Activated CD4-positive, alpha-beta T cell treated with anti-CD3 and anti-CD28 coated beads, Interleukin-2, amount 10 ng/mL, durations not matched to agents 24 days and 14 days (primary cell): ENCODE measurements at regions of chr5 and their contacts with region 1.

Region 1: DNA sequence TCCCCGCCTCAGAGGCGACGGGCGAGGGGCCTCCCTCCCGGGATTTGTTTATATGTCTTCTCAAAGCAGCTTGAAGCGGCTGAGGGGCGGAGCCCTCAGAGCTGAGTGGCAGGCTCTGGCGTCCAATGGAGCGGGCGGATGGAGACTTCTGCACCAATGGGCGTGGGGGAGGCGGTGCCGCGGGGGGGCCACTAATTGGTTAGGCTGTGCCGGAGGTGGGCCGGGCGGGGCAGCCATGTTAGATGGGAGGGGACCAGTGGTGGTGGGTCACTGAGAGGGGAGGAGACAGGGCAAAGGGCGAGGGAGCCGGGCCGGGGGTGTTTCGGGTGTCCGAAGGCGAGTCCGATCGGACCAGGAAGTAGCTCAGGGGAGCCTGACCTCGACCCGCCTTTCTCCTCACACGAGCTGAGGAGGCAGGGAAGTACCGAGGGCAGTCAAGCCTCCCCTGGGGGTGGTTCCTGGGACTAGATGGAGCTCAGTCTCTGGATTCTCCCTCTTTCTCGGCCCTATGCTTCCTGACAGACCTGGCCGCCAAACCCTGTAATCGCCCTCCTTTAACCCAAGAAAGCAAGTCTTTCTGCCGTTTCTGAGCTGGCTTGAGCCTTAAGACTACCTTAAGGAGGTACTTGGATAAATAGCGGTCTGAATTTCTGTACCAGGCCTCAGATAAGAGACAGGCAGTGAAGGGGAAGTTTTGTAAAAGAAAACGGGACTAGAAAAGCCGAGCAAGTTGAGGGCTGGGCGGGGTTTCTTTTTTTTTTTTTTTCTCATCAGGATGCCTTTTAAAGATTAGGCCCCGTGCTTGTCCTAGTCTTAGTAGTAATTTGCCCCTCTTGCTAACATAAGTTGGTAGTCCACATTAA is 1.1 kb downstream of the CREBRF start:
- DNase-seq: peak; percentile 100
- H3K4me3 Mint-ChIP-seq: peak overlapping the region; percentile 95
- H3K27ac Mint-ChIP-seq: peak overlapping the region; percentile 96
- H3K4me1 Mint-ChIP-seq: peaks cover 24% of the 10 kb centered on the region
- H3K27me3 Mint-ChIP-seq: no peaks in the 10 kb centered on the region

Region 2: GRCh38 chr5:172006321-172007174 is 1050.7 kb before region 1 on chr5 and contains the start of gene FBXW11:
- intact Hi-C with region 1: loop called (anchors 2 kb)
- DNase-seq: peak; percentile 98
- H3K4me3 Mint-ChIP-seq: peak within 1 kb of the TSS; percentile 99
- H3K27ac Mint-ChIP-seq: peak within 1 kb of the TSS; percentile 99
- H3K4me1 Mint-ChIP-seq: peaks cover 46% of the 10 kb centered on the region
- H3K27me3 Mint-ChIP-seq: no peaks in the 10 kb centered on the region
- total RNA-seq, gene FBXW11: 53.3 and 54.4 TPM in 2 replicates

Region 3: GRCh38 chr5:172412724-172413286 is 644.5 kb before region 1 on chr5:
- intact Hi-C with region 1: loop called (anchors 5 kb)
- DNase-seq: peak; percentile 65
- H3K4me3 Mint-ChIP-seq: peak overlapping the region; percentile 63
- H3K27ac Mint-ChIP-seq: peak overlapping the region; percentile 80
- H3K4me1 Mint-ChIP-seq: peaks cover 29% of the 10 kb centered on the region
- H3K27me3 Mint-ChIP-seq: peaks cover 8% of the 10 kb centered on the region

Region 4: DNA sequence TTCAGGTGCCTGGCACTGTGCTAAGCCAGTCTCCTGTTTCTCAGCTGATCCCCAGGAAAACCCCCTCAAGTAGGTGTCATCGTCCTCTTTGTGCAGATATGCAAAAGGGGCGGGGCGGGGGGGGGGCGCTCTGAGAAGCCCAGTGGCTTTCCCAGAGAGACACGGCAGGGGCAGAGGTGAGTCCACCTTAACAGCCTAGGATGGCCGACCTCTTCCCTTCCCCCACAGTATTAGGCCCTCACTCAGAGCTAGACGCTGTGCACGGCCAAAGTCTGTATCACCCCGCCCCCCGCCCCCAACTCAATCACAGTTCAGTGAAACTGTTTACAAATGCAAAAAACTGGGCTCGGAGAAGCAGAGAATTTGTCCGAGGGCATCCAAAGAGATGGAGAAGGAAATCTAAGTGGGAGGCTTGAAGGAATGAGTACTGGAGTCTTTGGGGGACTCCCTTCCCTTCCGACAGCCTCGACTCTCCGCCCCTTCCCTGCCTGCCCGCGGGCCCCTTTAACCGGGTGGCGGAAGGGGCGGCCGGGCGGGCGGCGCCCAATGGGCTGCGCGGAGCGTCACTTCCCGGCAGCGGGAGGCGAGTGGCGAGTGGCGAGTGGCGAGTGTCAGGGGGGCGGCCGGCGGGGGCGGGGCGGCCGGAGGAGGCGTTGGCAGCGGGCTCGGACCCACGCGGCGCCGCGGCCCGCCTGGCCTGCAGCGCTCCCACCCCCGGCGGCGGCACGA is 223.4 kb before region 1 on chr5 and contains the start of gene ERGIC1:
- intact Hi-C with region 1: loop called (anchors 2 kb)
- DNase-seq: peak; percentile 95
- H3K4me3 Mint-ChIP-seq: peak within 1 kb of the TSS; percentile 89
- H3K27ac Mint-ChIP-seq: peak within 1 kb of the TSS; percentile 76
- H3K4me1 Mint-ChIP-seq: peaks cover 27% of the 10 kb centered on the region
- H3K27me3 Mint-ChIP-seq: no peaks in the 10 kb centered on the region
- total RNA-seq, gene ERGIC1: 47.1 and 47.3 TPM in 2 replicates

Region 5: GRCh38 chr5:173035904-173036707 is 21.2 kb before region 1 on chr5:
- intact Hi-C with region 1: loop called (anchors 1 kb)
- DNase-seq: no peak
- H3K4me3 Mint-ChIP-seq: peak overlapping the region; percentile 82
- H3K27ac Mint-ChIP-seq: peak overlapping the region; percentile 88
- H3K4me1 Mint-ChIP-seq: peaks cover 45% of the 10 kb centered on the region
- H3K27me3 Mint-ChIP-seq: no peaks in the 10 kb centered on the region

Region 6: GRCh38 chr5:173069671-173070070 is 12.4 kb after region 1 on chr5:
- intact Hi-C with region 1: no loop called
- DNase-seq: no peak
- H3K4me3 Mint-ChIP-seq: no peak overlapping the region
- H3K27ac Mint-ChIP-seq: no peak overlapping the region
- H3K4me1 Mint-ChIP-seq: peaks cover 10% of the 10 kb centered on the region
- H3K27me3 Mint-ChIP-seq: no peaks in the 10 kb centered on the region

Region 7: DNA sequence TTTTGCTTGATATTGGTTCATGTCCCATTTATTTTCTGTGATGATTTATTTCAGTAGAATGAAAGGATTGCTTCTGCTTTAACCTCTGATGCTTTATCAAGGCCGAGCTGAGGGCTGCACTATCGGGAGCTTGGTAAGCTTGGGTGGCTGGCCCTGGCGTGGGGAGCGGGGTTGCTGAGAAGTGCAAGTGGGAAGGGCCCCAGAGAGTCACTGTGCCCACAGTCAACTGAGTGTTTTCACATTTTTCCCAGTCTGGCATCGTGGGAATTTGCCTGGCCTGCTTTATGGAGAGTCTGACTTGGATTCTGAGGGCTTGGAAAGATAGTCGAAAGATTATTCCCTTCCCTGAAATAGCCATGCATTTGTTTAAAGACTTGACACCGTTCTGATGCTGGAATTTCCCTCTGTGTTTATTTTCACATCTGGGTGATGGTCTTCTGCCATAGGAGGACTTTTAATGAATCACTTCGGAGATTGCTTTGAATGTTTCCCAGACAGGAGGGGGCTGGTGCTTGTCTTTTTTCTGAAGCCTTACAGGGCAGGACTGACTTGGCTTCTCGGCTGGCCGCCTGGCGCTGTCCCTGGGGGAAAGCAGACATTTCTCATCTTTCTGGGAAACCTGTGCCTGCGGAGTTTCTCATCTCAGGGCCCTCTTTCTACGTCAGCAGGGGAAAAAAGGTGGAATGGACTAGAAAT is 420.2 kb after region 1 on chr5:
- intact Hi-C with region 1: no loop called
- DNase-seq: no peak
- H3K4me3 Mint-ChIP-seq: no peak overlapping the region
- H3K27ac Mint-ChIP-seq: no peak overlapping the region
- H3K4me1 Mint-ChIP-seq: no peaks in the 10 kb centered on the region
- H3K27me3 Mint-ChIP-seq: no peaks in the 10 kb centered on the region